ENCODE measurements at regions of chr11 and their contacts with region 1.

Region 1: GRCh38 chr11:75867775-75868374 is 52.9 kb downstream of the UVRAG start:
- DNase-seq: no peak
- H3K4me3 ChIP-seq: no peak overlapping the region
- H3K27ac ChIP-seq: peak overlapping the region; percentile 20
- H3K4me1 ChIP-seq: peaks cover 38% of the 10 kb centered on the region
- H3K27me3 ChIP-seq: no peaks in the 10 kb centered on the region
- CTCF ChIP-seq: peak; percentile 84

Region 2: DNA sequence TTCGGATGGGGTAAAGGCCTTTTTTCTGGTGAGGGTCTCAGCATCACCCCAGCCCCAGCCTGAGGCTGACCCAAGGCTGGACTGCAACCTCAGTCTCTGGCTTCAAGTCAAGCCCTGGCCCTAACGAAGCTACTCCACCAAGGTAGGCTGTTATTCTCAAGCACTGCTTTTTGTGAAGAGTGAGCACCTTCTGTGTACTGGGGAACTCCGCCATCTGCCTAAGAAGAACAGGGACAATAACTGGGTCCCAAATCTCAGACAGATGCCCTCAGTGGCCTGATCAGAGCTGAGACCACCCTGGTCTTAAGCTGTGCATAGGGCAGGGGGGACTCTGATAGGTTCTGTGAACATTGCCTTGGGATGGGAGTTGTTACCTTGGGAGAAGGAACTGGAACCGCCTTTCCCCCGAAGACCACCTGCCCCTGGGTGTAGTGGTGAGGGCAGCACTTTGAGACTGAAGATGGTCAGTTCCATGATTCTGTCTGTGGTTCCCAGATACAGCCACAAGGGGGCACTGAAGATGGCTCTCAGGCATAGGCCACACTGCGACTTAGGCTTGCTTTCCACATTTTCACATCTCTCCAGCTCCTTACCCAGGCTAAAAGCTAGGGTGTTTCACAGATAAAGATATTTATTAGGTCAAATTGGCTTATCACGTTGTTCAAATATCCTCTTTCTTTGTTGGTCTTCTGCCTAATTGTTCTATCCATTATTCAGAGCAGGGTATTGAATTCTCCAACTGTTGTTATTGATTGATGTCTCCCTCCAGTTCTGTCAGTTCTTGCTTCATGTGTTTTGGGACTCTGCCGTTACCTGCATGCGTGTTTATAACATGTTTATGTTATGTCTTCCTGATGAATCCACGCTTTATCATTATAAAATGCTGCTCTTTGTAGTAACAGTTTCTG is 64.7 kb before region 1 on chr11:
- intact Hi-C with region 1: loop called (anchors 2 kb)
- DNase-seq: peak; percentile 69
- H3K4me3 ChIP-seq: no peak overlapping the region
- H3K27ac ChIP-seq: no peak overlapping the region
- H3K4me1 ChIP-seq: peaks cover 6% of the 10 kb centered on the region
- H3K27me3 ChIP-seq: no peaks in the 10 kb centered on the region
- CTCF ChIP-seq: peak; percentile 93

Region 3: GRCh38 chr11:75946531-75947530 is 79.0 kb after region 1 on chr11:
- intact Hi-C with region 1: no loop called
- DNase-seq: no peak
- H3K4me3 ChIP-seq: no peak overlapping the region
- H3K27ac ChIP-seq: peak overlapping the region; percentile 67
- H3K4me1 ChIP-seq: peaks cover 39% of the 10 kb centered on the region
- H3K27me3 ChIP-seq: no peaks in the 10 kb centered on the region
- CTCF ChIP-seq: no peak